CD8-positive, alpha-beta T cell (primary cell): ENCODE measurements at regions of chr14 and their contacts with region 1.

Region 1: DNA sequence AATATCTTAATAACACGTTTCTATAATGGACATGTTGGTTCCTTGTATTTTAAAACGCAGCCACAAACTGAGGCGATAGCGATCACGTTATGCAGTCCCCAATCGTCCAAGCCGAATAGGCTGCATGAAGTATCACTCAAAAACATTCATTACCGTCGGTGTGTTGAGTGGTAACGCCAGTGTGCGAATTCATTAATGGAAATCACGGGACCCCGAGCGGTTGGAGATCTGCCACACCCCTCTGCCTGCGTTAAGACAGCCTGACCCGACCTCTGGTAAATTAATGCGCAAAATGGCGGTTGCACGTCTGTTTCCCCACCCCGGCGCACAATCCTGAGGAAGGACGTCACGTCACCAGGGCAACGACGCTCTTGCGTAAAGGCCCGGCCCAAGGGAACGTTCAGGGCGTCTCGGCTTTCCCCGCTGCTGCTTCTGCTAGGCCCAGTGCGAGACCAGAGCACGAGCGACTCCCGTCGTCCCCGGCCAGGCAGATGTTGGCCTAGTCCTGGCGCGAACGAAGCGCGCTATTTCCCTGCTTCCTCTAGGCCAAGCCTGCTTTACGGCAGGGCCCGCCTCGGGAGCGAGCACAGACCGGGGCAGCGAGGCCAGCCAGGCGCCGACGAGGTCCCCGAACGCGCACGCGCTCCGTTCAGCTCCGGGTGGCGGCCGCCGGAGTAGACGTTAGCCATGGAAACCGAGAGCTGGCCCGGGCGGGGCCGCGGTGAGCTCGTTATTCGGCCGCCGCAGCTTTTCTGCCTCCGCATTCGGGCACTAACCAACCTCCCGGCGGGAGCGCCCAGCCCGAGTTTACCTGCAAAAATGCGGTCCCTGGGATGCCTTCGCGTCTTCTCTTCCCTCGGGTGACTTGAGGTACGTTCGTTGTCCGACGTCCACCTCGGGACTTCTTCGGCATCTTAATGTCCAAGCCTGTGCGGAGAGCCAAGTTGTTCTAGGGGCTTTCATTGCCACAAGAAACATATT is at the start of gene PCNX4:
- DNase-seq: peak; percentile 88 to 99 (median 94)
- ATAC-seq: peak; percentile 91
- H3K4me3 ChIP-seq: peak within 1 kb of the TSS; percentile 68 to 82
- H3K4me3 Mint-ChIP-seq: peak within 1 kb of the TSS; percentile 94
- H3K27ac ChIP-seq: peak within 1 kb of the TSS; percentile 84 to 97
- H3K27ac Mint-ChIP-seq: peak within 1 kb of the TSS; percentile 99
- H3K4me1 ChIP-seq: peaks cover 24% of the 10 kb centered on the region
- H3K4me1 Mint-ChIP-seq: peaks cover 46% of the 10 kb centered on the region
- H3K27me3 ChIP-seq: no peaks in the 10 kb centered on the region
- H3K27me3 Mint-ChIP-seq: no peaks in the 10 kb centered on the region
- CTCF ChIP-seq: no peak
- total RNA-seq, gene PCNX4: 16.3 to 25.1 TPM

Region 2: GRCh38 chr14:58427281-58428117 is 1664.3 kb before region 1 on chr14 and contains the starts of genes KIAA0586 and TIMM9:
- CTCF ChIA-PET with region 1: no interaction called
- POLR2A ChIA-PET with region 1: no interaction called
- intact Hi-C with region 1: loop called in 1 of 2 experiments (anchors 10 kb)
- DNase-seq: peak; percentile 93 to 99 (median 94)
- ATAC-seq: peak; percentile 91
- H3K4me3 ChIP-seq: peak within 1 kb of the TSS; percentile 91 to 94
- H3K4me3 Mint-ChIP-seq: peak within 1 kb of the TSS; percentile 95
- H3K27ac ChIP-seq: peak within 1 kb of the TSS; percentile 96 to 98
- H3K27ac Mint-ChIP-seq: peak within 1 kb of the TSS; percentile 99
- H3K4me1 ChIP-seq: peaks cover 26% of the 10 kb centered on the region
- H3K4me1 Mint-ChIP-seq: peaks cover 50% of the 10 kb centered on the region
- H3K27me3 ChIP-seq: no peaks in the 10 kb centered on the region
- H3K27me3 Mint-ChIP-seq: no peaks in the 10 kb centered on the region
- CTCF ChIP-seq: no peak
- total RNA-seq, gene KIAA0586: 15.4 to 15.9 TPM
- total RNA-seq, gene TIMM9: 28.1 to 37.5 TPM

Region 3: GRCh38 chr14:59964251-59965007 is 127.4 kb before region 1 on chr14:
- CTCF ChIA-PET with region 1: interaction called, 11 read pairs
- POLR2A ChIA-PET with region 1: interaction called, 3 read pairs
- intact Hi-C with region 1: loop called in 1 of 2 experiments (anchors 1 kb)
- DNase-seq: peak in 2 of 9 experiments; percentile 24 to 47
- ATAC-seq: peak; percentile 34
- H3K4me3 ChIP-seq: peak overlapping the region in 1 of 2 experiments; percentile 52
- H3K4me3 Mint-ChIP-seq: peak overlapping the region; percentile 88
- H3K27ac ChIP-seq: no peak overlapping the region
- H3K27ac Mint-ChIP-seq: peak overlapping the region; percentile 95
- H3K4me1 ChIP-seq: peaks cover 12% of the 10 kb centered on the region
- H3K4me1 Mint-ChIP-seq: peaks cover 18% of the 10 kb centered on the region
- H3K27me3 ChIP-seq: no peaks in the 10 kb centered on the region
- H3K27me3 Mint-ChIP-seq: no peaks in the 10 kb centered on the region
- CTCF ChIP-seq: no peak

Region 4: GRCh38 chr14:60116181-60116580 is 24.3 kb after region 1 on chr14:
- CTCF ChIA-PET with region 1: no interaction called
- POLR2A ChIA-PET with region 1: no interaction called
- intact Hi-C with region 1: no loop called
- DNase-seq: no peak
- ATAC-seq: no peak
- H3K4me3 ChIP-seq: no peak overlapping the region
- H3K4me3 Mint-ChIP-seq: no peak overlapping the region
- H3K27ac ChIP-seq: no peak overlapping the region
- H3K27ac Mint-ChIP-seq: peak overlapping the region; percentile 27
- H3K4me1 ChIP-seq: no peaks in the 10 kb centered on the region
- H3K4me1 Mint-ChIP-seq: peaks cover 8% of the 10 kb centered on the region
- H3K27me3 ChIP-seq: no peaks in the 10 kb centered on the region
- H3K27me3 Mint-ChIP-seq: no peaks in the 10 kb centered on the region
- CTCF ChIP-seq: no peak

Region 5: GRCh38 chr14:60164712-60165546 is 73.1 kb after region 1 on chr14 and contains the start of gene DHRS7:
- CTCF ChIA-PET with region 1: no interaction called
- POLR2A ChIA-PET with region 1: interaction called, 15 read pairs
- intact Hi-C with region 1: loop called (anchors 1 to 2 kb)
- DNase-seq: peak; percentile 28 to 89 (median 62)
- ATAC-seq: peak; percentile 70
- H3K4me3 ChIP-seq: peak within 1 kb of the TSS; percentile 68 to 88
- H3K4me3 Mint-ChIP-seq: peak within 1 kb of the TSS; percentile 99
- H3K27ac ChIP-seq: peak within 1 kb of the TSS; percentile 82 to 95
- H3K27ac Mint-ChIP-seq: peak within 1 kb of the TSS; percentile 100
- H3K4me1 ChIP-seq: peaks cover 31% of the 10 kb centered on the region
- H3K4me1 Mint-ChIP-seq: peaks cover 52% of the 10 kb centered on the region
- H3K27me3 ChIP-seq: no peaks in the 10 kb centered on the region
- H3K27me3 Mint-ChIP-seq: no peaks in the 10 kb centered on the region
- CTCF ChIP-seq: no peak
- total RNA-seq, gene DHRS7: 26.6 to 27.6 TPM

Region 6: DNA sequence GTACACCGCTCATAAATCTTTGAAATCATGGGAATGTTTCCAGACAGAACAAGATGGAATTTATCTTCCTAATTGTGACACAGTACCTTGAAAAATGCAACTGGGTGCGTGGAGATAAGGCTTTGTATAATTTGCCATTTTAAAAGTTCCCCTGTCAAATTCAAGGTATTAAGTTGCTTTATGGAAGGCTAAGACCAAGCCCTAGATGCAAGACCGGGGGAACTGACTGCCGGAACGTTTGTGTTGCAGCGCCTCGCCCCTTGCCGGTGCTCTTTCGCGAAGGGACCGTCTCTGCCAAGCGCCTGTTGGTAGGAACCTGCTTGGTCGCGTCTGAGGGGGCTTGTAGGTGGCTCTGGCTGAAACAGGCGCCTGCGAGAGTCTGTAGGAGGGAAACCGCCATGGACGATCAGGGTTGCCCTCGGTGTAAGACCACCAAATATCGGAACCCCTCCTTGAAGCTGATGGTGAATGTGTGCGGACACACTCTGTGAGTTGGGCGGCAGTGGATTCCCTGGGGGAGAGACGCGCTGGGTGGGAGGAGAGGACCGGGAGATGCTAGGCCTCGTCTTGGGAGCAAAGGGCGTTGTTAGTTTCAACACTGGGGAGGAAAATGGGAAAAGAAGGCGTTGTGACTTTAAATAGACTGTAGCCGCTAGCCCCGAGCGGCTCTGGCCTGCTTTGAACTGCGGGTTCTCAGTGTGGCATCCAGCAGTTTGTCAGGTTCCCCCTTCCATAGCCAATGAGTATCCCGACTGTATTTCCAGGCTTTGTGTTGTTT is 642.8 kb after region 1 on chr14 and contains the start of gene MNAT1:
- CTCF ChIA-PET with region 1: no interaction called
- POLR2A ChIA-PET with region 1: no interaction called
- intact Hi-C with region 1: loop called in 1 of 2 experiments (anchors 10 kb)
- DNase-seq: peak; percentile 62 to 88 (median 78)
- ATAC-seq: peak; percentile 98
- H3K4me3 ChIP-seq: peak within 1 kb of the TSS; percentile 83 to 84
- H3K4me3 Mint-ChIP-seq: peak within 1 kb of the TSS; percentile 100
- H3K27ac ChIP-seq: peak within 1 kb of the TSS; percentile 40 to 56
- H3K27ac Mint-ChIP-seq: peak within 1 kb of the TSS; percentile 95
- H3K4me1 ChIP-seq: peaks cover 19% of the 10 kb centered on the region
- H3K4me1 Mint-ChIP-seq: peaks cover 36% of the 10 kb centered on the region
- H3K27me3 ChIP-seq: no peaks in the 10 kb centered on the region
- H3K27me3 Mint-ChIP-seq: peaks cover 12% of the 10 kb centered on the region
- CTCF ChIP-seq: no peak
- total RNA-seq, gene MNAT1: 12.0 to 14.5 TPM

Region 7: GRCh38 chr14:61750708-61751474 is 1659.1 kb after region 1 on chr14:
- CTCF ChIA-PET with region 1: no interaction called
- POLR2A ChIA-PET with region 1: no interaction called
- intact Hi-C with region 1: loop called in 1 of 2 experiments (anchors 10 kb)
- DNase-seq: peak; percentile 44 to 90 (median 74)
- ATAC-seq: peak; percentile 96
- H3K4me3 ChIP-seq: peak overlapping the region; percentile 53 to 73
- H3K4me3 Mint-ChIP-seq: peak overlapping the region; percentile 88
- H3K27ac ChIP-seq: peak overlapping the region; percentile 43 to 45
- H3K27ac Mint-ChIP-seq: peak overlapping the region; percentile 80
- H3K4me1 ChIP-seq: peaks cover 4% of the 10 kb centered on the region
- H3K4me1 Mint-ChIP-seq: peaks cover 8% of the 10 kb centered on the region
- H3K27me3 ChIP-seq: no peaks in the 10 kb centered on the region
- H3K27me3 Mint-ChIP-seq: peaks cover 2% of the 10 kb centered on the region
- CTCF ChIP-seq: no peak